ENCODE measurements at regions of chr1 and their contacts with region 1.

Region 1: GRCh38 chr1:201511941-201512539 is 5.1 kb upstream of the CSRP1 start:
- DNase-seq: no peak
- H3K4me3 ChIP-seq: no peak overlapping the region
- H3K27ac ChIP-seq: no peak overlapping the region
- H3K4me1 ChIP-seq: peaks cover 3 to 5% (median 5%) of the 10 kb centered on the region in 4 experiments; a peak in 6 of 7 replicates
- H3K27me3 ChIP-seq: peaks cover under 1 to 18% (median 12%) of the 10 kb centered on the region in 4 experiments
- CTCF ChIP-seq: no peak
- EP300 ChIP-seq: no peak
- POLR2A ChIP-seq: no peak
- RAD21 ChIP-seq: no peak

Region 2: GRCh38 chr1:201317551-201317950 is 194.5 kb before region 1 on chr1:
- CTCF ChIA-PET with region 1: no interaction called
- POLR2A ChIA-PET with region 1: no interaction called
- DNase-seq: no peak
- H3K4me3 ChIP-seq: no peak overlapping the region
- H3K27ac ChIP-seq: no peak overlapping the region
- H3K4me1 ChIP-seq: no peaks in the 10 kb centered on the region
- H3K27me3 ChIP-seq: no peaks in the 10 kb centered on the region
- CTCF ChIP-seq: no peak
- EP300 ChIP-seq: no peak
- POLR2A ChIP-seq: no peak
- RAD21 ChIP-seq: no peak

Region 3: DNA sequence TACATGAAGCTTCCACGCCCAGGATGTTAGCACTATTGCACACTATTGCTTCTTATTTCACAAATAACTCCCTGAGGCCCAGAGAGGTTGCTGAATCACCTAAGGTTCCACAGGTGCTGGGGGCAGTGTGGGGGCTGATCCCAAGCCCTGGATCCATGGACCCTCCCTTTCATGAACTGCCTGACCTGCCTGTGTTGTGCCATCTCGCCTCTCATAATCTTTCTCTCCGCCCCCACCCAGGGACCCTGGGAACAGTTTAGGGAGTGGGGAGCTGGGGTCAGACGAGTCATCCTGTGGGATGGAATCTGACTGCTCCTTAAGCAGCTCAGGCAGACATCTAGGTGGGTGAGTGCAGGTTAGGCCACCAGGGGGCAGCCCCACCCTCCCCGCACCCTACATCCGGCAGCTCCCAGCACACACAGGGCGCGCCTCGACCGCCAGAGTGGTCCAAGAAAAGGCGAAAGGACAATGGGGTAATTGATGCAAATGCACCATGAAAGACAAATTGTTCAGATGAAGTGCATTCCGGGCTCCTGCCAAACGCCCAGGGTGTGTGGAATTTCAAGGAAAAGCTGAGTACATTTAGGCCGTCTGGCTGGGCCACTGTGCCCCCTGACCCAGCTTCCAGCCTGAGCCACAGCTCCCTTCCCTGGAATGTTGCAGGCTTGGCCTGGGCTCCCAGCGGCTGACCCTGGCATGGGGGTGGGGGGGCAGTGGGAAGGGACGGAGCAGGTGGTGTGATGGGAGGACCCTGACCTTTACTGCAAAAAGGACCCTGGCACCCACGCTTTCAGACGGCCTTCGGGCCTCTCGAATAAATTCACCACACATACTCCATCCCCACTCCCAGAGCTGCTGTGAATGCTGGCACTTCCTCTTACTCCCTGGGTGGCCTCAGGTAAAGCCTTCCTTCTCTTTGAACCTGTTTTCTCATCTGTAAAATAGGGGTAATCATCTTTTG is 63.8 kb before region 1 on chr1:
- CTCF ChIA-PET with region 1: interaction called, 57 read pairs
- POLR2A ChIA-PET with region 1: no interaction called
- DNase-seq: peak; percentile 79 to 84
- H3K4me3 ChIP-seq: peak overlapping the region in 3 of 4 experiments; percentile 7 to 33 (median 17); a peak in 3 of 8 replicates
- H3K27ac ChIP-seq: no peak overlapping the region
- H3K4me1 ChIP-seq: peaks cover 4 to 20% (median 15%) of the 10 kb centered on the region in 4 experiments
- H3K27me3 ChIP-seq: no peaks in the 10 kb centered on the region; a peak in 1 of 7 replicates
- CTCF ChIP-seq: peak; percentile 86 to 92 (median 91)
- EP300 ChIP-seq: no peak
- POLR2A ChIP-seq: no peak
- RAD21 ChIP-seq: peak; percentile 68 to 75

Region 4: GRCh38 chr1:201468844-201469511 is 43.1 kb before region 1 on chr1 and contains the start of gene PHLDA3:
- CTCF ChIA-PET with region 1: interaction called, 53 read pairs
- POLR2A ChIA-PET with region 1: no interaction called
- DNase-seq: peak; percentile 77 to 82
- H3K4me3 ChIP-seq: peak within 1 kb of the TSS; percentile 64 to 75 (median 69)
- H3K27ac ChIP-seq: no peak within 1 kb of the TSS; the same call in 1 of the 2 replicates
- H3K4me1 ChIP-seq: peaks cover 0 to 19% (median 11%) of the 10 kb centered on the region in 4 experiments; a peak in 6 of 7 replicates
- H3K27me3 ChIP-seq: peaks cover 5 to 35% (median 31%) of the 10 kb centered on the region in 4 experiments
- CTCF ChIP-seq: no peak
- EP300 ChIP-seq: no peak
- POLR2A ChIP-seq: no peak; a peak in 1 of 3 replicates
- RAD21 ChIP-seq: no peak
- total RNA-seq, gene PHLDA3: 27.5 and 27.7 TPM in 2 replicates

Region 5: GRCh38 chr1:201686714-201687455 is 174.8 kb after region 1 on chr1:
- CTCF ChIA-PET with region 1: interaction called, 10 read pairs
- POLR2A ChIA-PET with region 1: no interaction called
- DNase-seq: no peak
- H3K4me3 ChIP-seq: peak overlapping the region in 2 of 4 experiments; percentile 2 to 27; a peak in 3 of 8 replicates
- H3K27ac ChIP-seq: no peak overlapping the region
- H3K4me1 ChIP-seq: peaks cover 13 to 31% (median 23%) of the 10 kb centered on the region in 4 experiments
- H3K27me3 ChIP-seq: no peaks in the 10 kb centered on the region
- CTCF ChIP-seq: no peak
- EP300 ChIP-seq: no peak; a peak in 1 of 3 replicates
- POLR2A ChIP-seq: no peak
- RAD21 ChIP-seq: 0 out of 4 replicates have a peak, but pooled peaks of 1 of the 2 experiments have one; percentile 1

Measured in H1 (cell line).